Activated naive CD4-positive, alpha-beta T cell treated with anti-CD3 and anti-CD28 coated beads for 36 hours (primary cell): ENCODE measurements at regions of chr9 and their contacts with region 1.

Region 1: DNA sequence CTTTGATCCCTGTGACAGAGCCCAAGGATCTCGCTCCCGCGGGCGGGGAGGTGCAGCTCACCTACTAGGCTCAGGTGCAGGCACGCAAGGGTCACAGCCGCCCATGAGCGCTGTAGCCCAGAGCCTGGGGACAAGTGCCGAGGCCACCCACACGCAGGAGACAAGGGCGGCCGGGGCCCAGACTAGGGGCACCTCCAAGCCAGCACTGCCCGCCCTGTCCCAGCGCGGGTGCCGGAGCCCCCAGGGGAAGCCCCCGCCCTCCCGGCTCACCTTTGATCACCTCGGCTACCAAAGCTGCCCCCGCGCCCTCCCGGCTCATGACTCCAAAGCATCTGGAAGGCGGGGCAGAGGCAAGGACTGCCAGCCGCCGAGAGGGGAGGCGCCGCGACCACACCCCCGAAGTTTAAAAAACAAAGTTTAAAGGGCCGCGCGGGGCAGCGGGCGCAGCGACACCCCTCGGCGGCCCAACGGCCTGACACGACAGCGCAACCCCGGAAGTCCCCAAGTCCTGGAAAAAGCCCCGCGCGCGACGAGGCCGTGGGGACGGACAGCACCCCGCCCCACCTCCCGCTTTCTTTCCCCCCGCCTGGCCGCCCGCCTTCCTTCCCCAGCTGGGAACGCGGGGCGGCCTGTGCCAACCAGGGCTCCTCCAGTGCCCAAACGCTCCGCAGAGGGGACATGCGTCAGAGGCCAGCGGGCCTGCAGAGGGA is 53.0 kb downstream of the CDC14B start:
- DNase-seq: peak; percentile 76
- H3K4me3 Mint-ChIP-seq: peak overlapping the region; percentile 72
- H3K27ac Mint-ChIP-seq: no peak overlapping the region
- H3K4me1 Mint-ChIP-seq: peaks cover 23% of the 10 kb centered on the region
- H3K27me3 Mint-ChIP-seq: no peaks in the 10 kb centered on the region

Region 2: DNA sequence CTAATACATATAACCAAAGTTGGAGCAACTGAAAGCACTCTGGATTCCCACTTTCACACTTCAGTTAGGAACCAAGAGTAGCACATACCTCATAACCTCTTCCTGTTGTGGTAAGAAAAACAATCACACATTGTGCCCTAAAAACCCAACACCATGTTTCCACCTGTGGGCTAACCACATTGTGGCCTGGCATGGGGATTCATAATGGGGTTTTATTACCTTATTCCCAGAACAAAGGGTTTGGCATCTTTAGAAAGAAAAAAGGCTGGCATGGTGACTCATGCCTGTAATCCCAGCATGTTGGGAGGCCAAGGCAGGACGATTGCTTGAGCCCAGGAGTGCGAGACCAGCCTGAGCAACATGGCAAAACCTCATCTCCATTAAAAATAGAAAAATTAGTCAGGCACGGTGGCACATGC is 325.3 kb before region 1 on chr9:
- CTCF ChIA-PET with region 1: no interaction called
- intact Hi-C with region 1: loop called (anchors 5 kb)
- DNase-seq: peak; percentile 83
- H3K4me3 Mint-ChIP-seq: no peak overlapping the region
- H3K27ac Mint-ChIP-seq: no peak overlapping the region
- H3K4me1 Mint-ChIP-seq: peaks cover 13% of the 10 kb centered on the region
- H3K27me3 Mint-ChIP-seq: peaks cover 23% of the 10 kb centered on the region

Region 3: GRCh38 chr9:96449845-96450612 is 116.6 kb before region 1 on chr9 and contains the start of gene HABP4:
- CTCF ChIA-PET with region 1: interaction called, 4 read pairs
- intact Hi-C with region 1: loop called (anchors 1 kb)
- DNase-seq: peak; percentile 95
- H3K4me3 Mint-ChIP-seq: peak within 1 kb of the TSS; percentile 85
- H3K27ac Mint-ChIP-seq: peak within 1 kb of the TSS; percentile 66
- H3K4me1 Mint-ChIP-seq: peaks cover 29% of the 10 kb centered on the region
- H3K27me3 Mint-ChIP-seq: peaks cover 4% of the 10 kb centered on the region
- total RNA-seq, gene HABP4: 7.3 to 7.9 TPM

Region 4: GRCh38 chr9:96484521-96484931 is 82.1 kb before region 1 on chr9:
- CTCF ChIA-PET with region 1: no interaction called
- intact Hi-C with region 1: loop called (anchors 1 kb)
- DNase-seq: peak; percentile 34
- H3K4me3 Mint-ChIP-seq: no peak overlapping the region
- H3K27ac Mint-ChIP-seq: peak overlapping the region; percentile 63
- H3K4me1 Mint-ChIP-seq: peaks cover 34% of the 10 kb centered on the region
- H3K27me3 Mint-ChIP-seq: no peaks in the 10 kb centered on the region

Region 5: DNA sequence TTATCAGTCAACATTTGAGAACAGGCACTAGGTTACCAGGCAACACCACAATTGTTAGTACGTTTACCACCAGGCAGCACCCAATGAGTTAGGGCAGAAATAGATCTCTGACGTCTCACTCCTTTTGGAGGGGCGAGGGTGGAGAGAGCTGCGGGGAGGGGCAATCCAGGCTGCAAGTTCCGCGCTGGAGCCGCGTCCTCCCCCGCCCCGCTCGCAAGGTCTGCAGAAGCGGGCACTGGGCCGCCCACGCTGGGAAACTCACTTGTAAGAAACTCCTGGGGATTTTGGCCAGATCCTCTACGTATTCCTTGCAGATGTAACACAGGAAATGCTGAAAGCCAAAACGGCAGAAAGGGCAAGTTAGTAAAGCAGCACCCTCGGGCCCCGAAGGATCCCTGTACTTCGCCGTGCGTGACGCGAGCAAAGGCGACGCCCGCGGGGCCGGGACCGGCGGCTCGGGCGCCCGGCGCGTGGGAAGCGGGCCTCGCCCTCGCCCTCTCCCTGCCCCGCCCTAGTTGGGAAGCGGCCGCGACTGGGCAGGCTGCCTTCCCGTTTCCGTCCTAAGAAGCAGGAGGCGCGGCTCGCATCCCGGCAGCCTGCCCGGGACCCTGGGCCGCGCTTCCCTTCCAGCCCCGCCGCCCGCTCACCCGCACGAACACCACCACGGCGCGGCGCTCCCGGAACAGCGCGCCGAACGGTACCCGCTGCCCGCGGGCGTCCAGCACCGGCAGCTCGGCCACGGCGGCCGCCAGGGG is 88.0 kb after region 1 on chr9:
- CTCF ChIA-PET with region 1: no interaction called
- intact Hi-C with region 1: loop called (anchors 5 kb)
- DNase-seq: peak; percentile 65
- H3K4me3 Mint-ChIP-seq: peak overlapping the region; percentile 73
- H3K27ac Mint-ChIP-seq: peak overlapping the region; percentile 15
- H3K4me1 Mint-ChIP-seq: peaks cover 9% of the 10 kb centered on the region
- H3K27me3 Mint-ChIP-seq: no peaks in the 10 kb centered on the region